Heart left ventricle (tissue), 16 donors: ENCODE measurements at regions of chr6 and their contacts with region 1.

Region 1: DNA sequence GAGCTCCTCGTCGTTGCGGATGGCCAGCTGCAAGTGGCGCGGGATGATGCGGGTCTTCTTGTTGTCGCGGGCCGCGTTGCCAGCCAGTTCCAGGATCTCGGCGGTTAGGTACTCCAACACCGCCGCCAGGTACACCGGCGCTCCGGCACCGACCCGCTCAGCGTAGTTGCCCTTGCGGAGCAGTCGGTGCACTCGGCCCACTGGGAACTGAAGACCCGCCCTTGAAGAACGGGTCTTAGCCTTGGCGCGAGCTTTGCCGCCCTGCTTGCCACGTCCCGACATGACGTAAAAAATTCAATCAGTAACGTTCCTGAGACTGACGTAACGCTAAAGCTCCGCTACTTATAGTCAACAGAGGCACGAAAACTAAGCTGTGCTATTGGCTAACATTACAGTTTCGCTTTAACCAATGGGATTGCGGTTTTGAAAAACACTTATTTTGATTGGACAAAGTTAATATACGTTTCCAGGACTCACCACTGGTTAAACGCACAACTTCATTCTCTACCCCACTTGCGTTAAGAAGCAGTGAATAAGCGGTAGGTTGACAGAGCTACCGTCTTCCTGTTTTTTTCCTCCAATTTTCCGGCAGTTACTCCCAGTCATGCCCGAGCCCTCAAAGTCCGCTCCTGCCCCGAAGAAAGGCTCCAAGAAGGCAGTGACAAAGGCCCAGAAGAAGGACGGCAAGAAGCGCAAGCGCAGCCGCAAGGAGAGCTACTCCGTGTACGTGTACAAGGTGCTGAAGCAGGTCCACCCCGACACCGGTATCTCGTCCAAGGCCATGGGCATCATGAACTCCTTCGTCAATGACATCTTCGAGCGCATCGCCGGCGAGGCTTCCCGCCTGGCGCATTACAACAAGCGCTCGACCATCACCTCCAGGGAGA is 73.9 kb downstream of the OR2B2 start:
- DNase-seq: peak; percentile 74 to 85 (median 76)
- ATAC-seq: peak; percentile 93 to 95 (median 95)
- H3K4me3 ChIP-seq: peak overlapping the region; percentile 62 to 87 (median 76)
- H3K27ac ChIP-seq: peak overlapping the region; percentile 88 to 98 (median 95)
- H3K4me1 ChIP-seq: peaks cover 0 to 33% (median 20%) of the 10 kb centered on the region in 12 donors
- H3K27me3 ChIP-seq: no peaks in the 10 kb centered on the region
- CTCF ChIP-seq: peak in 1 of 12 donors; percentile 11
- POLR2A ChIP-seq: peak; percentile 4 to 90

Region 2: GRCh38 chr6:27237089-27237803 is 601.1 kb before region 1 on chr6:
- intact Hi-C with region 1: no loop called
- DNase-seq: no peak
- ATAC-seq: no peak
- H3K4me3 ChIP-seq: no peak overlapping the region
- H3K27ac ChIP-seq: no peak overlapping the region
- H3K4me1 ChIP-seq: no peaks in the 10 kb centered on the region
- H3K27me3 ChIP-seq: peaks cover 12 to 93% (median 63%) of the 10 kb centered on the region in 9 donors
- CTCF ChIP-seq: no peak
- POLR2A ChIP-seq: no peak

Region 3: GRCh38 chr6:27809939-27810767 is 28.1 kb before region 1 on chr6:
- intact Hi-C with region 1: loop called in 1 of 10 experiments (anchors 1 kb)
- DNase-seq: peak; percentile 58 to 78 (median 73)
- ATAC-seq: peak; percentile 72 to 87 (median 82)
- H3K4me3 ChIP-seq: peak overlapping the region; percentile 32 to 77 (median 64)
- H3K27ac ChIP-seq: peak overlapping the region; percentile 25 to 96 (median 76)
- H3K4me1 ChIP-seq: peaks cover 0 to 63% (median 10%) of the 10 kb centered on the region in 12 donors
- H3K27me3 ChIP-seq: peaks cover 0 to 81% (median 8%) of the 10 kb centered on the region in 9 donors
- CTCF ChIP-seq: no peak
- POLR2A ChIP-seq: peak; percentile 69 to 98

Region 4: DNA sequence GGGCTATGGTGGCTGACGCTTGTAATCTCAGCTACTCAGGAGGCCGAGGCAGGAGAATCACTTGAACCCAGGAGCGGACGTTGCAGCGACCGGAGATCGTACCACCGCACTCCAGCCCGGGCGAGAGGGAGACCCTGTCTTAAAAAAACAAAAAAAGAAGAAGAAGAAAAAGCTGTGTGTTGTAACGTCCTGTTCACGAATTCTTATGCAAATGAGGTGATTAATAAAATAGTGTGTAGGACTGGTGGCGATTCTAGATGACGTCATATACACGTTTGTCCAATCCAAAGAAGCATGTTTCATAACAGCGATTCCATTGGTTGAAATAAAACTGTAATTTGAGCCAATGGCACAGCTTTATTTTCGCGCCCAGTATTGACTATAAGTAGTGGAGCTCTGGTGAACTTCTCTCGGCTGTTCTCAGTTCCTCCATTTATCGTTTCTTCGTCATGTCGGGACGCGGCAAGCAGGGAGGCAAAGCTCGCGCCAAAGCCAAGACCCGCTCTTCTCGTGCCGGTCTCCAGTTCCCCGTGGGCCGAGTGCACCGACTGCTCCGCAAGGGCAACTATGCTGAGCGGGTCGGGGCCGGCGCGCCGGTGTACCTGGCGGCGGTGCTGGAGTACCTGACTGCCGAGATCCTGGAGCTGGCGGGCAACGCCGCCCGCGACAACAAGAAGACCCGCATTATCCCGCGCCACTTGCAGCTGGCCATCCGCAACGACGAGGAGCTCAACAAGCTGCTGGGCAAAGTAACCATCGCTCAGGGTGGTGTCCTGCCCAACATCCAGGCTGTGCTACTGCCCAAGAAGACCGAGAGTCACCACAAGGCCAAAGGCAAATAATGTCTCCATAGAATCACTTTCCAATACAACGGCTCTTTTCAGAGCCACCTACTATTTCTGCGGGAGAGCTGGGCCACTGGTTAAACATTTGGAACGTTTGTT is 26.9 kb after region 1 on chr6:
- intact Hi-C with region 1: loop called in 2 of 10 experiments (anchors 2 to 5 kb)
- DNase-seq: peak; percentile 31 to 72 (median 54)
- ATAC-seq: peak; percentile 91 to 94 (median 94)
- H3K4me3 ChIP-seq: peak overlapping the region; percentile 55 to 98 (median 70)
- H3K27ac ChIP-seq: peak overlapping the region in 8 of 12 donors; percentile 14 to 85 (median 62)
- H3K4me1 ChIP-seq: peaks cover 6 to 41% (median 22%) of the 10 kb centered on the region in 12 donors
- H3K27me3 ChIP-seq: peaks cover 0 to 37% (median 18%) of the 10 kb centered on the region in 9 donors
- CTCF ChIP-seq: no peak
- POLR2A ChIP-seq: peak in 1 of 2 donors; percentile 49

Region 5: DNA sequence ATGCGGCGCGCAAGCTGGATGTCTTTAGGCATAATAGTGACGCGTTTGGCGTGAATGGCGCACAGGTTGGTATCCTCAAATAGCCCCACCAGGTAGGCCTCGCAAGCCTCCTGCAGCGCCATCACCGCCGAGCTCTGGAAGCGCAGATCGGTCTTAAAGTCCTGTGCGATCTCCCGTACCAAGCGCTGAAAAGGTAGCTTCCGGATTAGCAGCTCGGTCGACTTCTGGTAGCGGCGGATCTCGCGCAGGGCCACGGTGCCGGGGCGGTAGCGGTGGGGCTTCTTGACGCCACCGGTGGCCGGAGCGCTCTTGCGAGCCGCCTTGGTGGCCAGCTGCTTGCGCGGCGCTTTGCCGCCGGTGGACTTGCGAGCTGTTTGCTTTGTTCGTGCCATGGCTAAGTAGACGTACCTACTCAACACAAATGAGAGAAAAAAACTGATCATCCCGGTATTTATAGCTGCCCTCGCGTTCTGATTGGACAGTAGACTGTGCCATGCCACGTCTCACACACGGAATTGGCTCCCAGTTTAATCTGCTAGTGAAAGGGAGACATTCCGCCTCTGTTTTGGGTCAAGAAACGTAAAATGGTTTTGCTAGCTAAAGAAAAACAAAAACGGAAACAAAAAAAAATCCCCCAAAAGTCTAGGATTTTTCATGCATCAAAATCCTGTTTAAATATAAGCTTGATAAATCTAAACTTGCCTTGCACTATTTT is 33.8 kb after region 1 on chr6:
- intact Hi-C with region 1: loop called in 1 of 10 experiments (anchors 5 kb)
- DNase-seq: peak; percentile 60 to 80 (median 74)
- ATAC-seq: peak in 3 of 4 donors; percentile 89 to 90 (median 90)
- H3K4me3 ChIP-seq: peak overlapping the region; percentile 21 to 72 (median 59)
- H3K27ac ChIP-seq: peak overlapping the region in 11 of 12 donors; percentile 27 to 94 (median 53)
- H3K4me1 ChIP-seq: peaks cover 0 to 42% (median 8%) of the 10 kb centered on the region in 12 donors
- H3K27me3 ChIP-seq: peaks cover 0 to 82% (median 41%) of the 10 kb centered on the region in 9 donors
- CTCF ChIP-seq: peak in 1 of 12 donors; percentile 12
- POLR2A ChIP-seq: peak; percentile 58 to 94